Activated B cell treated with CpG ODN at 0.5 μM for 24 hours (primary cell): ENCODE measurements at regions of chr1 and their contacts with region 1.

Region 1: DNA sequence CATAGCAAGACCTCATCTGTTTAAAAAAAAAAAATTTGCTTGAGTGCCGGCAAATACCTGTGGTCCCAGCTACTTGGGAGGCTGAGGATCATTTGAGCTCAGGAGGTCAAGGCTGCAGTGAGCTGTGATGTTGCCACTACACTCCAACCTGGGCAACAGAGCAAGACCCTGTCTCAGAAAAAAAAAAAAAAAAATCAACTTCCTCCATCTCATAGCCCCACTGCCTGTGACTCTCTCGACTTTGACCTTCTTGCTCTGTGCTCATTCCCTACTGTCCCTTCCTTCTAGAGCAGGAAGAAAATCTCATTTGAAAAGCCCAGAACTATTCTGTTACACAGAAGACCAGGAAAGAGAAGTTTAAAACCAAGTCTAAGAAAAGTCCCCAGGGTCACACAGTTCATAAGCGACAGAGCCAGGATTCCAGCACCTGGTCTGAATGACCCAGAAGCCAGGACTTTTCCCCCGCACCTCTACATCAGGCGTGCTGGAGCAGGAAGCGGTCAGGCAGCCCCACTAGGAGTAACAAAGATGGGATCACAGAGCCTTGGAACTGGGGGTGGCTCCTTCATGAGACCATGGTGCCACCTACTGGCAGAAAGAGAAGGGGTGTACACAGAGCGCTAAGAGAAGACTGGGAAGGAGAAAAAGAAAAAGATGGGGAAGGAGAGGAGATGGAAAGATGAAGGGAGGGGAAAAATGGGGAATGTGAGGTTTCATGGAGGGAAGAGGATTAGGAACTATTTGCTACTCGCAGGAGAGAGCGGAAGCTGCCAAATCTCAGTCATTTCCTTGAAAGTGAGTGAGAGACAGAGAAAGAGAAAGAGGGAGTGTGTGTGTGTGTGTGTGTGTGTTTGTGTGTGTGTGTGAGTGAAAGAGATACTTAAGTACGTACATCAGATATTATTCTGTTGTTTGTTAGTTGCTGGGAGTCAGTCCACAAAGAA is 3.1 kb upstream of the P3R3URF start:
- DNase-seq: peak; percentile 40
- ATAC-seq: peak; percentile 80
- H3K4me3 Mint-ChIP-seq: no peak overlapping the region
- H3K27ac Mint-ChIP-seq: no peak overlapping the region
- H3K4me1 Mint-ChIP-seq: peaks cover 8% of the 10 kb centered on the region
- H3K27me3 Mint-ChIP-seq: no peaks in the 10 kb centered on the region
- CTCF ChIP-seq: peak; percentile 85

Region 2: DNA sequence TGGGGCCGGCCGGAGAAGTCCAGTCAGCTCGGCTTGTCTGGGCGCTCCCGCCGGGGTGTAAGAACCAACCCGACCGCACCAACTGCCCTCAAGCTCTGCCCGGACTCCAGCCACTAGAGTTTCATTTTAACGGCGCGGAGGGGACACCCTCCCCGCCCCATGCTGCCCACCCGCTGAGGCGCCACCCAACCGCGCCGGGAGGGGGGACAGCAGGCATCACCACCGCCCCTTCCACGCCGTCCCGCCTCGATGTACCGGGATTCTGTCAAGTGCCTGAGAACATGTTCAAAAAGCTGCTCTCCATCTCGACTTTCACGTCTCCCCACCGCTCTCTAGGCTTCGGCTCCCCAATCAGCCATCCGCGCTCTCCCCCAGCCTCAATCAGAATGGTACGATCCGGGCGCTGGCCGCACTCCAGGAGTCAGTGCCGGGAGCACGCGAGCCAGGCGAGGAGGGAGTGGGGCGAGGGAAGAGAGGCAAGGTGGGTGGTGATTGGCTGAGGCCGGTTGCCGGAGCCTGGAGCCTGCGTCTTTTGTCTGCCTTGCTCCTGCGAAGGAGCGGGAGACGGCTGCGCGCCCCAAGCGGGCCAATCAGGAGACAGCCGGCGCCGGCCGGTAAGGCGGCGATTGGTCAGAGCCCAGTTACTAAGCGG is 46.8 kb before region 1 on chr1 and contains the start of gene PIK3R3:
- CTCF ChIA-PET with region 1: no interaction called
- POLR2A ChIA-PET with region 1: interaction called, 3 read pairs
- intact Hi-C with region 1: loop called (anchors 5 kb)
- DNase-seq: peak; percentile 75
- ATAC-seq: peak; percentile 89
- H3K4me3 Mint-ChIP-seq: peak within 1 kb of the TSS; percentile 93
- H3K27ac Mint-ChIP-seq: peak within 1 kb of the TSS; percentile 83
- H3K4me1 Mint-ChIP-seq: peaks cover 25% of the 10 kb centered on the region
- H3K27me3 Mint-ChIP-seq: peaks cover 34% of the 10 kb centered on the region
- CTCF ChIP-seq: no peak
- total RNA-seq, gene PIK3R3: 1.0 and 1.3 TPM in 2 replicates

Region 3: DNA sequence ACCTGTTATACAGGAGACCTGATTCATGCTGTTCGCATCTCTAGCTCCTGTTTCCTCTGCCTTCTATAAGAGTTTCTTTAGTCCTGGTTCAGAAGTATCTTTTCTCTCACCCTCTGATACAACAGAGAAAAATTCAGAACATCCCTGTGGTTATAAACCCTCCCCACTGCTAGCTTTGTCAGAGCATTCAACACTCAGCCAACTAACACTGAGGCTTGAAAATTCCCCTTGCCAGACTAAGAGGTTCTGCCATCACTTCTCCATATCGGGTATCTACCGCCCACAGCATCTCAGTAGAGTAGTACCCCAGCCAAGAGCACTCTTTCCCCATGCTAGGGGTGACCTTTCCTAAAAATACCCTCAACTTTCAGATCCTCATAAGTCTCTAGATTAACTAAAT is 27.4 kb before region 1 on chr1:
- CTCF ChIA-PET with region 1: no interaction called
- POLR2A ChIA-PET with region 1: no interaction called
- intact Hi-C with region 1: no loop called
- DNase-seq: no peak
- ATAC-seq: no peak
- H3K4me3 Mint-ChIP-seq: no peak overlapping the region
- H3K27ac Mint-ChIP-seq: no peak overlapping the region
- H3K4me1 Mint-ChIP-seq: peaks cover 2% of the 10 kb centered on the region
- H3K27me3 Mint-ChIP-seq: no peaks in the 10 kb centered on the region
- CTCF ChIP-seq: no peak

Region 4: GRCh38 chr1:46223472-46223943 is 44.1 kb after region 1 on chr1:
- CTCF ChIA-PET with region 1: no interaction called
- POLR2A ChIA-PET with region 1: no interaction called
- intact Hi-C with region 1: loop called (anchors 1 kb)
- DNase-seq: peak; percentile 24
- ATAC-seq: peak; percentile 93
- H3K4me3 Mint-ChIP-seq: no peak overlapping the region
- H3K27ac Mint-ChIP-seq: no peak overlapping the region
- H3K4me1 Mint-ChIP-seq: peaks cover 2% of the 10 kb centered on the region
- H3K27me3 Mint-ChIP-seq: peaks cover 4% of the 10 kb centered on the region
- CTCF ChIP-seq: no peak